ENCODE measurements at regions of chr6 and their contacts with region 1.

Region 1: DNA sequence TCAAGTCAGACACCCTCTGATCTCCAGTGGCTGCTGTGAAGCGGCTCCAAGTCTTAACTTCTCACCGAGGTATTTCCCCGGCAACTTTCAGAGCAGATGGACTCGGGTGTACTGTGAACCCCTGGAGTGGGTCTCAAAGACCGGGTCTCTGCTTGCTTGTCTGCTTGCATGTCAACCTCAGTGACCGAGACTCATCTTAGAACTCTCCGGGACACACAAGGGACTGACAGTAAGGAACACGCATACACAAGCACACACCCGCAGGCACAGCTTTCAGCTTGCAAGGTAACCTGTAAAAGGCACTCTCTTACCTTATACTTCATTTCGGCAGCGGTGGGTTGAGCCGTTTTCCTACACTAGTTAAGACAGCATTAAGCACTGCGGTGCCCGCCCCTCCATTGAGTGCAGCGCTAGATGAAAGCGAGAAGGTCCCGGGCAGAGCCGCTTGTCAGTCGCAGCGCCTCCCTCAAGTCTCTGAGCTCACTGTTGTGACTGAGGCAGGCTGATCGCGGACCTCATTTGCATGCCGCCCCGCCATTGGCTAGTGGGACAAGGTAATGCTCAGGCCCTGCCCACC is at the start of gene NEDD9:
- H3K4me3 ChIP-seq: peak within 1 kb of the TSS; percentile 54
- H3K27ac ChIP-seq: peak within 1 kb of the TSS; percentile 88
- H3K4me1 ChIP-seq: peaks cover 14% of the 10 kb centered on the region
- CTCF ChIP-seq: no peak

Region 2: GRCh38 chr6:10847684-10848083 is 384.6 kb before region 1 on chr6:
- CTCF ChIA-PET with region 1: no interaction called
- POLR2A ChIA-PET with region 1: interaction called, 11 read pairs
- H3K4me3 ChIP-seq: no peak overlapping the region
- H3K27ac ChIP-seq: no peak overlapping the region
- H3K4me1 ChIP-seq: no peaks in the 10 kb centered on the region; the same call in 1 of the 2 replicates
- CTCF ChIP-seq: no peak

Region 3: DNA sequence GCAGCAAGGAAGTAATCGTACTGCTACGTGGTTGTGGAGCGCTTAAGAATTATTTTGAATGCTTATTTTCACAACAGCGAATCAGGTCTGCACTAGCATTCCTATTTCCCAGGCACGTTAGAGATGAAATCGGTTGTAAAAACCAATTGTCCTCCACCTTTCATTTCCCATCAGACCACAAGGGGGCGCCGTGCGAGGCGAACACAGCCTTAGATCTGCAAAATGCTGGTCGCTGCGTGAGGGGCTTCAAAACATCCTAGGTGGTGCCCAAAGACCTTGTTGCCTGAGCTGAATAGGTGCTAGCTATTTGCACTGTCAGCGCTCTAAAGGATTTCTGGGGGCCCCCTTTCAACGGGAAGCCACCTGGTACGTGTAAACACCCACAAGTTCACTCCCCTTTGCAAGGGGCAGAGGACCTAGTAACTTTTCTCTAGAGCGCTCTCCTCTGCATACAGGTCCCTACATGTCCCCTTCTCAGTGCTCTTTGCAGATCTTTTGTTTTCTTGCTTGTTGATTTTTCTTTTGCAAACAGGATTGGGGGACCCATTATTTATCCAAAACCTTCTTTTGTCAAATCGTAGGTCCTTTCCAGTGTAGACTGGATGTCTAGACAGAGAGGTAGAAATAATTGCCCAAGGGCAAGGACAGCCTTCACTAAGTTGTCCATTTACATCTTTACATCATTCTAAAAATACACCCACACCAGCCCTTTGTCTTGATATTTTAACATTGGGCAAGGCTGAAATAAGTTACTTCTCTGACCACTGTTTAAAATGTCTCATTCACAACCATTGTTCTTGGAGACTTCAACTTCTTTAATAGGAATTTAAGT is 59.6 kb before region 1 on chr6:
- CTCF ChIA-PET with region 1: interaction called, 8 read pairs
- POLR2A ChIA-PET with region 1: interaction called, 10 read pairs
- H3K4me3 ChIP-seq: peak overlapping the region; percentile 21
- H3K27ac ChIP-seq: no peak overlapping the region
- H3K4me1 ChIP-seq: peaks cover 5% of the 10 kb centered on the region; the same call in 1 of the 2 replicates
- CTCF ChIP-seq: peak; percentile 63

Region 4: DNA sequence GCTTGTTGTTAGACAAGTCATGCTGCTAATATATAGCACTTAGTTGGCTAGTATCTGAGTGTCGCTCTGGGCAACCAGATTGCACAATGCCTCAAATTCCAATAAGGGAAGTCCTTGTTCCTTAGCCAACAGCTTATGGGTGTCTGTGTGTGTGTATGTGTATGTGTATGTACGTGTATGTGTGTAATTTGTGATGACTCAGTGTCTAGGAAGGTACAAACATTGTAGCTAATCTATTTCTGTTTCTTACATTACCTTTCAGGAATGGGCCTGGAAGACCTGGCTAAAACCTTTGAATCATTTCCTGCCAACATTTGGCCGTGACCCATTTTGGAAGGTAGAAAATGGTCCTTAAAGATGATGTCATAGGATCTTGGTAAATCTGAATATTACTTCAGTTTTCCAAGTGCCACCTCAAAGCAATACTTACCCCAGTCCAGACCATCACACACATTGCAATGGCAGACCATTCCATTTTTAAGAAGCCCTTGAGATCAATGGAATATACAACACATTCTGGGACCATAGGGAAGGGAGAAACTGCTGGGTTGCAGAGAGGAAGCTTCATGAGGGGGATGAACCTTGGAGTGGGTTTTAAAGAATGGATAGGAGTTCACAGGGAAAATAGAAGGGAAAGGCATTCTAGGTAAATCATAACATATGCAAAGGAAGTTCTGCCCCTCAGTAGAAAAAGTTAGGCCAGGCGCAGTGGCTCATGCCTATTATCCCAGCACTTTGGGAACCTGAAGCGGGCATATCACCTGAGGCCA is 24.9 kb before region 1 on chr6:
- CTCF ChIA-PET with region 1: interaction called, 3 read pairs
- POLR2A ChIA-PET with region 1: interaction called, 22 read pairs
- H3K4me3 ChIP-seq: no peak overlapping the region
- H3K27ac ChIP-seq: no peak overlapping the region
- H3K4me1 ChIP-seq: peaks cover 12% of the 10 kb centered on the region
- CTCF ChIP-seq: no peak

Region 5: GRCh38 chr6:11218538-11219399 is 13.5 kb before region 1 on chr6:
- CTCF ChIA-PET with region 1: interaction called, 4 read pairs
- POLR2A ChIA-PET with region 1: interaction called, 22 read pairs
- H3K4me3 ChIP-seq: no peak overlapping the region
- H3K27ac ChIP-seq: no peak overlapping the region
- H3K4me1 ChIP-seq: peaks cover 26% of the 10 kb centered on the region
- CTCF ChIP-seq: no peak

Region 6: GRCh38 chr6:11263291-11263775 is 31.1 kb after region 1 on chr6:
- CTCF ChIA-PET with region 1: interaction called, 12 read pairs
- POLR2A ChIA-PET with region 1: interaction called, 9 read pairs
- H3K4me3 ChIP-seq: no peak overlapping the region
- H3K27ac ChIP-seq: no peak overlapping the region; the same call in 1 of the 2 replicates
- H3K4me1 ChIP-seq: peaks cover 3% of the 10 kb centered on the region; the same call in 1 of the 2 replicates
- CTCF ChIP-seq: no peak

Region 7: GRCh38 chr6:11270030-11271027 is 38.0 kb after region 1 on chr6:
- CTCF ChIA-PET with region 1: interaction called, 4 read pairs
- POLR2A ChIA-PET with region 1: interaction called, 28 read pairs
- H3K4me3 ChIP-seq: no peak overlapping the region
- H3K27ac ChIP-seq: peak overlapping the region; percentile 70
- H3K4me1 ChIP-seq: peaks cover 28% of the 10 kb centered on the region
- CTCF ChIP-seq: no peak